HepG2 (cell line): ENCODE measurements at regions of chr19 and their contacts with region 1.

Region 1: DNA sequence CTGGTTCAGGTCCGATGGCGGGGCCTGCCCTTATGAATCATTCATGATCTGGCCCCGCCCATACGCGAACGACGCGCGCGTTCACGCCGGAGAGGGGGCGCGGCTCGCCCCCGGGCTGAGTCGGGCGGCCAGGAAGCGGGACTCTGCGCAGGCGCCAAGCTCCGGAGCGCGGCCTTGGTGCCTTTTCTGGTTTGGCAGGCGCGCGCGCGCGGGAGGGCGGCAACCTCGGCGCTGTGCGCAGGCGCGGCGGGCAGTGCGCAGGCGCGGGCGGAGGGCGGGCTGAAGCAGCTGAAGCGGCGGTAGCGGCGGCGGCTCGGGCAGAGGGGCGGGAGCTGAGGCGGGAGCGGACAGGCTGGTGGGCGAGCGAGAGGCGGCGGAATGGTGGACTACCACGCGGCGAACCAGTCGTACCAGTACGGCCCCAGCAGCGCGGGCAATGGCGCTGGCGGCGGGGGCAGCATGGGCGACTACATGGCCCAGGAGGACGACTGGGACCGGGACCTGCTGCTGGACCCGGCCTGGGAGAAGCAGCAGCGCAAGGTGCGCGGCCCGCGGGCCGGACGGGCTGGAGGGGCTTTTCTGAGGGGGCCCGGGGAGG is at the start of gene ACTN4:
- DNase-seq: peak; percentile 91
- ATAC-seq: peak; percentile 69
- H3K4me3 ChIP-seq: peak within 1 kb of the TSS; percentile 84 to 100 (median 100)
- H3K27ac ChIP-seq: peak within 1 kb of the TSS; percentile 92
- H3K4me1 ChIP-seq: peaks cover 32% of the 10 kb centered on the region
- H3K27me3 ChIP-seq: peaks cover 0 to 4% of the 10 kb centered on the region in 2 experiments; a peak in 2 of 5 replicates
- CTCF ChIP-seq: no peak
- EP300 ChIP-seq: peak in 1 of 2 experiments; percentile 26; a peak in 1 of 4 replicates
- POLR2A ChIP-seq: peak; percentile 97
- RAD21 ChIP-seq: peak; percentile 75
- total RNA-seq, gene ACTN4: 167 and 192 TPM in 2 replicates

Region 2: GRCh38 chr19:38658462-38659306 is 11.2 kb after region 1 on chr19:
- CTCF ChIA-PET with region 1: no interaction called
- POLR2A ChIA-PET with region 1: interaction called, 59 read pairs
- in situ Hi-C with region 1: no loop called
- intact Hi-C with region 1: no loop called
- DNase-seq: peak; percentile 95
- ATAC-seq: peak; percentile 80
- H3K4me3 ChIP-seq: no peak overlapping the region; a peak in 1 of 6 replicates
- H3K27ac ChIP-seq: peak overlapping the region; percentile 69
- H3K4me1 ChIP-seq: peaks cover 98% of the 10 kb centered on the region
- H3K27me3 ChIP-seq: no peaks in the 10 kb centered on the region
- CTCF ChIP-seq: no peak
- EP300 ChIP-seq: peak; percentile 36 to 62; a peak in 1 of 4 replicates
- POLR2A ChIP-seq: peak in 1 of 2 experiments; percentile 51; a peak in 2 of 4 replicates
- RAD21 ChIP-seq: no peak

Region 3: GRCh38 chr19:38683393-38684080 is 36.1 kb after region 1 on chr19:
- CTCF ChIA-PET with region 1: no interaction called
- POLR2A ChIA-PET with region 1: interaction called, 33 read pairs
- in situ Hi-C with region 1: no loop called
- intact Hi-C with region 1: loop called (anchors 5 kb)
- DNase-seq: peak; percentile 96
- ATAC-seq: peak; percentile 85
- H3K4me3 ChIP-seq: peak overlapping the region in 1 of 3 experiments; percentile 27; a peak in 2 of 6 replicates
- H3K27ac ChIP-seq: peak overlapping the region; percentile 85
- H3K4me1 ChIP-seq: peaks cover 99% of the 10 kb centered on the region
- H3K27me3 ChIP-seq: no peaks in the 10 kb centered on the region
- CTCF ChIP-seq: no peak
- EP300 ChIP-seq: peak in 1 of 2 experiments; percentile 50; a peak in 2 of 4 replicates
- POLR2A ChIP-seq: peak in 1 of 2 experiments; percentile 35; a peak in 1 of 4 replicates
- RAD21 ChIP-seq: no peak

Region 4: DNA sequence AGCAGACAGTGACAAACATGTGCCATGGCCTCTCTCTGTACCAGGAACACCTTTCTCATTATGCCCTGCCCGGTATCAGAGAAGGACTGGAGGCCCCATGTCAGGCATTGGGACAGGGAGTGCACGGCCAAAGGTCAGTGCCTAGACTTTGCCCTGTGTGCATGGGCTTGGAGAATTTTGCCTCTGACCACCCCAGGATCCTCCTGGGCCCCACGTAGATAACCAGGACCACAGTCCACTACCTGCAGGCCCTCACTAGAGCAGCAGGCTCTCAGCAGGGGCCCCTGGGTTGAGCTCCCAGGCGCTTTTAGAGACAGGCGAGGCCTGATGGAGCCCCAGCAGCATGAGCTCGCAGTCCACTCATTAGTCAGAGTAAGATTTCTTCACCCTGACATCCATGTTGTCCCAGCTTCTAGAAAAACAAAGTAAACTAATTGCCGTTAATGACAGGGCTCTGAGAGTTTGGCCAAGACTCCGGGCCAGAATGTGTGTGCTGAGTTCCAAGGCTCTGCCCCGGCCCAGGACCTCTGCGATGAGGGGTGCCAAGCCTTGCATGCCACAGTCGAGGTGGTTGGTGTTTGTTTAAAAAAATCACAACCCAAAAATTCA is 54.1 kb after region 1 on chr19:
- CTCF ChIA-PET with region 1: no interaction called
- POLR2A ChIA-PET with region 1: interaction called, 63 read pairs
- in situ Hi-C with region 1: no loop called
- intact Hi-C with region 1: loop called (anchors 5 kb)
- DNase-seq: peak; percentile 93
- ATAC-seq: peak; percentile 89
- H3K4me3 ChIP-seq: peak overlapping the region in 1 of 3 experiments; percentile 47; a peak in 2 of 6 replicates
- H3K27ac ChIP-seq: peak overlapping the region; percentile 99
- H3K4me1 ChIP-seq: peaks cover 95% of the 10 kb centered on the region
- H3K27me3 ChIP-seq: no peaks in the 10 kb centered on the region
- CTCF ChIP-seq: peak; percentile 21; the same call in 1 of the 2 replicates
- EP300 ChIP-seq: peak; percentile 83 to 92
- POLR2A ChIP-seq: peak; percentile 20 to 75; a peak in 2 of 4 replicates
- RAD21 ChIP-seq: peak; percentile 67